K562 (cell line): ENCODE measurements at regions of chr5 and their contacts with region 1.

Region 1: DNA sequence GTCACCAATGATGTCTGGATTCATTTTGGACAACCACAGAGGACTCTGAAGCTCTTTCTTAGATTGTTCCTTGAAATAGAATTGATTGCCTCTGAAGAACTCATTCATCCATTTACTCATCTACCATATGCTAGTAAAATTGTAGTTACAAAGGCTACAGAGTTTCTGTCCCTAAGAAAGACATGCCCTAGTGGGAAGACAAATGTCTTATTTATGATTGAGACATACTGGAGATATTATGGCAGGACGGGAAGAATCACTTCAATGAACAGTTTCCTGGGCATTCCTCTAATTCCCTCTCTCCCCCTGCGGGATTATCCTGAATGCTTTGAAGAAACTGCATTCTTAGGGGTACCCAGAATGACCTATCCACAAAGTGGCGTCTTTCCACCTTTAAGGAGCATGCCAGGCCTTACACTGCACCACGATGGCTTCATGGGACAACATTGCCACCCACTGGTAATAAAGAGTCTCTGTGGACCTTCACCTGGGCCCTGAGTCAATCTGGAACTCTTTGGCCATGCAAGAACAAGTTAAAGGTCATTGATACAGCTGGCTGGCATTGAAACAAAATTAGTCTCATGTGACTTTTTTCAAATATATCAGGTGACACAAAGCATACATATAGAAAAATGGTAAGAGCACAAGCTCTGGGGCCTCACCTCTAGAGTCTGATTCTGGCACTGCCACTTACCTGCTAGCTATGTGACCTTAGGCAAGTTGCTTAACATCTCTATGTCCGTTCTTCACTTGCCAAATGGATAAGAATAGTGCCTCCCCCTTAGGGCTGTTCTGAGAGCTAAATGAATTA is 32.1 kb downstream of the ANKRD55 start:
- DNase-seq: peak; percentile 38 to 81 (median 56)
- ATAC-seq: peak; percentile 100
- H3K4me3 ChIP-seq: no peak overlapping the region
- H3K27ac ChIP-seq: no peak overlapping the region
- H3K4me1 ChIP-seq: peaks cover 0 to 8% of the 10 kb centered on the region in 2 experiments; a peak in 2 of 5 replicates
- H3K27me3 ChIP-seq: no peaks in the 10 kb centered on the region
- CTCF ChIP-seq: peak; percentile 82 to 93 (median 93)
- EP300 ChIP-seq: no peak
- POLR2A ChIP-seq: no peak
- RAD21 ChIP-seq: peak; percentile 97 to 99

Region 2: DNA sequence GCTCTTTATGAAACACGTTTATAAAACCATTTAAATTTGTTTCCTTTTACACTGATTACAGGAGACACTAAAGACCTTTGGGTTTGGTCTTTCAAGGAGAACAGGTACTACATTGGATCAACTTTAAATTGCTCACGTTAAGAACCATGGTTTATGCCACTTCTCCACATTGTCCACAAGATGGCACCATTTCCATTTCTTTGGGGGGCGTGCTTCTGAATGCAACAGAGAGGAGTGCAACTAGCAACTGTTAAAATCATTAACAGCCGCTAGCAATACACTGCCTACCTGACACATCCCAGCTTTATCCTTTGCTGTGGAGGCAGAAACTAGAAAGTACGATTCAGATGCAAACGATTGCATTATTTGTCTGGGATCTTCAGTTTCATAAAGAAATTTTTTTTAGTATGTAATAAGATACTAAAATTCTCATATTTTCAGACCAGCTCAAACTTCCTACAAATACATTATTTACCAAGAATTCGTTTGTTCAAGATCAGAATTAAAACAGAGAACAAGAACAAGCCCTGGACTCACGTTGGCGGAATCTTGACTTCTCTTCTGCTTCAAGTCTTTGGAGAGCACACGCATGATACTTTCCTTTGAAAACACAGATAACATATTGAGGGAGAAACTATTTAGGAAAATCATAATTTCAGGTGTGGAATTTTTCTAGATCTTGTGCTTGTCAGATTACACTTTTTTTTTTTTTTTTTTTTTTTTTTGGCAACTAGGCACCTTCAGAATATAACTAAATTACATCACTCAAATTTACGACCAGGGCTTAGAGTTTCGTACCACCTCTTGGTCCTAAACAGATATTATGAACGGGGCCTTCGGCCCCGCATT is 1028.8 kb before region 1 on chr5:
- CTCF ChIA-PET with region 1: no interaction called
- POLR2A ChIA-PET with region 1: no interaction called
- in situ Hi-C with region 1: no loop called
- intact Hi-C with region 1: loop called (anchors 10 kb)
- DNase-seq: peak; percentile 73 to 86 (median 76)
- ATAC-seq: peak; percentile 74
- H3K4me3 ChIP-seq: peak overlapping the region; percentile 46
- H3K27ac ChIP-seq: no peak overlapping the region
- H3K4me1 ChIP-seq: peaks cover 11 to 22% of the 10 kb centered on the region in 2 experiments
- H3K27me3 ChIP-seq: peaks cover 0 to 2% of the 10 kb centered on the region in 2 experiments; a peak in 3 of 5 replicates
- CTCF ChIP-seq: peak; percentile 75 to 91 (median 81)
- EP300 ChIP-seq: no peak
- POLR2A ChIP-seq: no peak
- RAD21 ChIP-seq: peak; percentile 93 to 94

Region 3: GRCh38 chr5:55936100-55936693 is 264.9 kb before region 1 on chr5:
- CTCF ChIA-PET with region 1: interaction called, 46 read pairs
- POLR2A ChIA-PET with region 1: no interaction called
- in situ Hi-C with region 1: no loop called
- intact Hi-C with region 1: loop called (anchors 1 kb)
- DNase-seq: peak; percentile 68 to 86 (median 73)
- ATAC-seq: peak; percentile 96
- H3K4me3 ChIP-seq: no peak overlapping the region
- H3K27ac ChIP-seq: no peak overlapping the region
- H3K4me1 ChIP-seq: no peaks in the 10 kb centered on the region; a peak in 1 of 5 replicates
- H3K27me3 ChIP-seq: no peaks in the 10 kb centered on the region
- CTCF ChIP-seq: peak; percentile 91 to 97 (median 97)
- EP300 ChIP-seq: no peak
- POLR2A ChIP-seq: no peak
- RAD21 ChIP-seq: peak; percentile 87

Region 4: DNA sequence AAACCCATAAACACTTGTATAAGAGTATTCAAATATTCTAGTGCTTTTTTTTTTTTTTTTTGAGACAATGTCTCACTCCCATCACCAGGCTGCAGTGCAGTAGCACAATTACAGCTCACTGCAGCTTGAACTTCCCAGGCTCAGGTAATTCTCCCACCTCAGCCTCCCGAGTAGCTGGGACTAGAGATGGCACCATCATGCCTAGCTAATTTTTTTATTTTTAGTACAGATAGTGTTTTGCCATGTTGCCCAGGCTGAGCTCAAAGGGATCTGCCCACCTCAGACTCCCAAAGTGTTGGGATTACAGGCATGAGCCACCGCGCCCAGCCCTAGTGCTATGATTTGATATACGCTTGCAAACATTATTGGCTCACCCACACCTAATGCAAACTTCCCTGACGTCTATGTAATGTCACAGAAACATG is 218.1 kb before region 1 on chr5:
- CTCF ChIA-PET with region 1: interaction called, 4 read pairs
- POLR2A ChIA-PET with region 1: no interaction called
- in situ Hi-C with region 1: no loop called
- intact Hi-C with region 1: loop called (anchors 1 kb)
- DNase-seq: no peak
- ATAC-seq: peak; percentile 62
- H3K4me3 ChIP-seq: no peak overlapping the region
- H3K27ac ChIP-seq: no peak overlapping the region
- H3K4me1 ChIP-seq: no peaks in the 10 kb centered on the region
- H3K27me3 ChIP-seq: no peaks in the 10 kb centered on the region
- CTCF ChIP-seq: peak; percentile 20 to 51 (median 29); a peak in 2 of 6 replicates
- EP300 ChIP-seq: no peak
- POLR2A ChIP-seq: no peak
- RAD21 ChIP-seq: peak; percentile 40 to 55

Region 5: GRCh38 chr5:55994574-55995333 is 206.3 kb before region 1 on chr5 and contains the start of gene IL6ST:
- CTCF ChIA-PET with region 1: no interaction called
- POLR2A ChIA-PET with region 1: interaction called, 3 read pairs
- in situ Hi-C with region 1: no loop called
- intact Hi-C with region 1: loop called (anchors 5 kb)
- DNase-seq: peak; percentile 97 to 98 (median 98)
- ATAC-seq: peak; percentile 98
- H3K4me3 ChIP-seq: peak within 1 kb of the TSS; percentile 90
- H3K27ac ChIP-seq: peak within 1 kb of the TSS; percentile 90
- H3K4me1 ChIP-seq: peaks cover 16 to 33% of the 10 kb centered on the region in 2 experiments
- H3K27me3 ChIP-seq: no peaks in the 10 kb centered on the region
- CTCF ChIP-seq: peak in 2 of 3 experiments; percentile 33 to 37; a peak in 3 of 6 replicates
- EP300 ChIP-seq: no peak
- POLR2A ChIP-seq: peak; percentile 89
- RAD21 ChIP-seq: no peak; a peak in 1 of 4 replicates
- polyA plus RNA-seq, gene IL6ST: 2.0 to 2.3 TPM